ENCODE measurements at regions of chr5 and their contacts with region 1.

Region 1: DNA sequence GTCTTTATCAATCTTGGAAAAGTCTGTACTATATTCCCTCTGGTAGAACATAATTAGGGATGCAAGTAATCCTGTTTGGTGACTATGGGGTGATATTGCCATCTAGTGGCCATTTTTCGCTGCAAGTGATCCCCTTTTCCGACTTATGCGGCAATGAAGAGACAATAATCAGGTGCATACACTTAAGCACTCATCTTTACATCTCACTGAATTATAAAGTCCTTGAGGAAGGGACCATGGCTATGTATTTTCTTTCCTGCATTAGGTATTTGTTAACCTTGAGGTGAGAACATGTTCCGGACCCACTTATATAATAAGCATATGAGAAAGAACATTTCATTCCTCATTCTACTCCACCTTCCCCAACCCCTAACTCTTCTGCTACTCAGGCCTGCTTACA is 19.6 kb upstream of the LIX1 start:
- DNase-seq: peak in 5 of 10 donors; percentile 37 to 68 (median 55)

Region 2: DNA sequence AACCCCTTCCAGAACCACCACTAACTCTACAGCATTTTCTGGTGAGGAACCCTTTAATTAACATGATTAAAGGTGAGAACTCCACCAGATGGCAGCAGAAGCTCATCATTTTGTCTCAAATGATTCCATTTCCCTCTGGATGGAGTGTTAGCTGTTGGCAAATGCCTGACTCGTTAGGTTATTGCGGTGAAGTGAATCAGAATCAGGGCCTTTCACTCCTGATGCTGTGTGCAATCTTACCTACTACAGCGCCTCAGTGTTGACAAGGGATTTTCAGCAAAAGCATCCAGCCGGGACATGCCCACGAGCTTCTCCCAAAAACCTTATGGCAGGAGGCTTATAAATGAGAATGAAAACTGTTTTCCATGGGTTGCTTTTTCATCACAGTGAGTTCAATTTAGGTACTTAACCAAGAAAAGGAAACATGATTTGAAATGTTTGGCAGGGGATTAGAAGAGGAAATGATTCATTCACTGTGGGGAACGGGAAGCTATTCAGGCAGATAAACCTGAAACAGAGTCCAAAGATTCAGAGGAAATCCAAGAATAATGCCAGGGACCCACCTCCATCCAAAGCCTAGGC is 547.8 kb before region 1 on chr5:
- intact Hi-C with region 1: loop called (anchors 10 kb)
- DNase-seq: peak in 5 of 10 donors; percentile 11 to 66 (median 36)

Region 3: DNA sequence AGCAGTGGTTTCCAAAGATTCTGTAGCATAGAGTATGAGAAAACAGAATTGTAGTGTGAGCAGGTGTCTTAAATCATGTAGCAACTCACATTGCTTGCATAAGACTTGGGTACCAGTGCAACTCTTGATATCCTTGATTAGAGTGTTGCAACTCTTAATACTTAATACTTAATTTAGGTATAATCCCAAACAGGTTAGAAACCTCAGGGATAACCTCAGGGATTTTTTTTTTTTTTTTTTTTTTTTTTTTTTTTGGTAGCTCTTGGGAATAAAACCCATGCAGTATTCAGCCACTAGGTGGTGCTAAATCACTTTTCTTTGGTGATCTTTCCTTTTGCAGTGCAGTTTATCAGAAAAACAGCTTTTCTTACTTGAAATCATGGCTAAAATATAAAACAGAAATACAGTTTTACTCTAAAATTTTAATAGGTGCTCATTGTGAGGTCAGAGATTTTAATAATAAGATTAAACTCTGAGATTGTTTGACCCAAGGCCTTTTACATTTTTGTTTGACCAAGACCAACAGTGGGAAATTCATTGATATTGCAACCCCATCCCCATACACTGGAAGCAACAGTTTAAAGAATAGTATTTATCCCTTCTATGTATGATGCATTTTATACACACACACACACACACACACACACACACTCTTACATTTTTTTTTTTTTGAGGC is 409.6 kb before region 1 on chr5:
- intact Hi-C with region 1: loop called (anchors 2 kb)
- DNase-seq: peak in 1 of 10 donors; percentile 22

Region 4: GRCh38 chr5:96790961-96791504 is 371.0 kb before region 1 on chr5:
- intact Hi-C with region 1: no loop called
- DNase-seq: no peak

Region 5: GRCh38 chr5:96868603-96869371 is 293.3 kb before region 1 on chr5:
- intact Hi-C with region 1: loop called (anchors 2 kb)
- DNase-seq: no peak

Region 6: DNA sequence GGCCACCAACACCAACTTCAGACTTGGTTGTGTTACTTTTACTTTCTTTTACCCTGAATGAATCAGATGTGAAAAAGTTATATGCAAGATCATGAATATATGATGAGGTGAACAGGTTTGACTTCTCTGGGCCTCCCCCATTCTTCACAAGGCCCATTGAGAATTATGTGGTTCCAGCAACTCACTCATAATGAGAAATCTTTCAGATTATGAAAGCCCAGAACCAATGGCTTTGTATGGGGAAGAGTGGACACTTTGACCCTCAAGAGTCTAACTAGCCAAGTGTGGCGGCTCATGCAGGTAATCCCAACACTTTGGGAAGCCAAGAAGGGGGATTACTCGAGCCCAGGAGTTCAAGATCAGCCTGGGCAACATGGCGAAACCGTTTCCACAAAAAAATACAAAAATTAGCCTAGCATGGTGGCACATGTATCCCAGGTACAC is 242.3 kb before region 1 on chr5:
- intact Hi-C with region 1: no loop called
- DNase-seq: no peak

Region 7: GRCh38 chr5:96934708-96935558 is 227.1 kb before region 1 on chr5:
- intact Hi-C with region 1: loop called (anchors 2 kb)
- DNase-seq: peak; percentile 84 to 98 (median 92)

Region 8: GRCh38 chr5:96997265-96997859 is 164.7 kb before region 1 on chr5:
- intact Hi-C with region 1: loop called (anchors 5 kb)
- DNase-seq: no peak

Measured in posterior cingulate gyrus (tissue), 11 donors.